Pancreas (tissue), 10 donors: ENCODE measurements at regions of chr11 and their contacts with region 1.

Region 1: DNA sequence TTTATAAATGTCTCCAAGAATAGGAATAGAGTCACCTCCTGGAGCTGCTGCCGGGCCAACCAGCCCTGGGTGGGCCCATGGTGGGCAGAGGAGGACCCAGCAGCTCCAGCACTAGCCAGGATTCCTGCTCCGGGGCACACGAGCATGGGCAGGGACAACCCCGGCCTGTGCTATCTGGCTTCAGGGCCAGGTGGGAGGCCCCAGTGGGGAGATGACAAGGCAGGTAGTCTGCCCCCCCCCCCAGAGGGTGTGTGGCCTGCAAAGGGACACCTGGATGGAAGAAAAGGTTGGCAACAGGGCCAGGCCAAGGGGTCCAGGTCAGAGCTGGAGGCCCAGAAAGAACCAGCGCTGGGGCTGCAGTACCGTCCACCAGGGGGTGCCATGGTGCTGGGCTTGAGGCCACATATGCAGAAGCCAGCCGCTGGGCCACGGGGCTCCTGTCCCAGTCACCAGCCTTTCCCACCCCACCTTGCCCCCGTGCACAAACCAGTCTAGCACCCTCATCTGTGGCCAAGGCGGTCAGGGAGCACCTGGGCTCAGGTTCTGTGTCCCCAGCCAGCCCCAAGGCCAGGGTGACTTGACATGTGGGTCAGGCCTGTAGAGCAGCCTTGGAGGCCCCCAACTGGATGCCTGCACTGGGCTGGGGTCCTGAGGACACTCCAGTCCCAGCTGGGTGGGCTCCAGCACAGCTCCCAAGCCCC is 3.5 kb downstream of the TSPAN32 start:
- DNase-seq: peak; percentile 70 to 98 (median 88)
- ATAC-seq: peak; percentile 60 to 85 (median 82)
- H3K4me3 ChIP-seq: no peak overlapping the region
- H3K27ac ChIP-seq: no peak overlapping the region
- H3K4me1 ChIP-seq: peaks cover 0 to 19% (median 10%) of the 10 kb centered on the region in 3 donors
- H3K27me3 ChIP-seq: no peaks in the 10 kb centered on the region
- CTCF ChIP-seq: peak; percentile 78 to 88 (median 86)

Region 2: DNA sequence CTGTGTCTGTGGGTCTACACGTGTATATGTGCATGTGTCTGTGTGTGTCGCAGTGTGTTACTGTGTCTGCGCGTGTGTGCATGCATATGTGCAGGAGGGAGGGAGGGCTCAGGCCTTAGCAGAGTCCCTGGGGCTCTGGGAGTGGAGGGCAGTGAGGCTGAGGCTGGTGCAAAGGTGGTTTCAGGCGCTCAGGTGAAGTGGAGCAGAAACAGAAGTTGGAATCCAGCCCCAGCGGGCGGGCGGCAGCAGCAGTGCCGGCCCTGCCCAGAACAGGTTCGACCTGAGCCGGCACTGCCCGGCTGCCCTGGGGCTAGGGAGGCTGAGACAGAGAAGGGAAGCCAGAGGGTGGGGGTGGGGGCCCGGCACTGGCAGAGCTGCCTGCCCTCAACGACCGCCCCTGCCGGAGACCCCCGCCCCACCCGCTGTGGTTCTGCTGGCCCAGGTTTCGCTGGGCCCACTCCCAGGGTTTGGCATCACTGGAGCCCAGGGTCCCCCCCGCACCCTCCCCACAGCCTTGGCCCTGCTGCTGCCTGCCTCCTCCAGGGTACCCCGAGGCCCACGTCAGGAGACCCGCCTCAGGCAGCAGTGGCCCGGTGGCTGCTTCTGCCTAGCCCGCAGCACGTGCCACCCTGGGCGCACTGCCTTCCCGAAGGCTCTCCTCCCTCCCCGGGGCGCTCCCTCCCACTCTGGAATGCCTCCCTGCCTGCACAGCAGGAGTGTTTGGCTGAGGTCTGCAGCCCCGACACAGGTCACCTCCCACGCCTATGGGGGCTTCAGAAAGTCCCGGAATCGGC is 48.2 kb before region 1 on chr11:
- intact Hi-C with region 1: no loop called
- DNase-seq: peak in 2 of 6 donors; percentile 57 to 63
- ATAC-seq: peak in 3 of 4 donors; percentile 61 to 82 (median 73)
- H3K4me3 ChIP-seq: no peak overlapping the region
- H3K27ac ChIP-seq: no peak overlapping the region
- H3K4me1 ChIP-seq: no peaks in the 10 kb centered on the region
- H3K27me3 ChIP-seq: no peaks in the 10 kb centered on the region
- CTCF ChIP-seq: no peak

Region 3: GRCh38 chr11:2420502-2421225 is 115.4 kb after region 1 on chr11:
- intact Hi-C with region 1: loop called (anchors 2 to 5 kb)
- DNase-seq: peak; percentile 59 to 92 (median 80)
- ATAC-seq: peak; percentile 93 to 97 (median 95)
- H3K4me3 ChIP-seq: no peak overlapping the region
- H3K27ac ChIP-seq: no peak overlapping the region
- H3K4me1 ChIP-seq: no peaks in the 10 kb centered on the region
- H3K27me3 ChIP-seq: no peaks in the 10 kb centered on the region
- CTCF ChIP-seq: peak; percentile 77 to 96 (median 92)

Region 4: DNA sequence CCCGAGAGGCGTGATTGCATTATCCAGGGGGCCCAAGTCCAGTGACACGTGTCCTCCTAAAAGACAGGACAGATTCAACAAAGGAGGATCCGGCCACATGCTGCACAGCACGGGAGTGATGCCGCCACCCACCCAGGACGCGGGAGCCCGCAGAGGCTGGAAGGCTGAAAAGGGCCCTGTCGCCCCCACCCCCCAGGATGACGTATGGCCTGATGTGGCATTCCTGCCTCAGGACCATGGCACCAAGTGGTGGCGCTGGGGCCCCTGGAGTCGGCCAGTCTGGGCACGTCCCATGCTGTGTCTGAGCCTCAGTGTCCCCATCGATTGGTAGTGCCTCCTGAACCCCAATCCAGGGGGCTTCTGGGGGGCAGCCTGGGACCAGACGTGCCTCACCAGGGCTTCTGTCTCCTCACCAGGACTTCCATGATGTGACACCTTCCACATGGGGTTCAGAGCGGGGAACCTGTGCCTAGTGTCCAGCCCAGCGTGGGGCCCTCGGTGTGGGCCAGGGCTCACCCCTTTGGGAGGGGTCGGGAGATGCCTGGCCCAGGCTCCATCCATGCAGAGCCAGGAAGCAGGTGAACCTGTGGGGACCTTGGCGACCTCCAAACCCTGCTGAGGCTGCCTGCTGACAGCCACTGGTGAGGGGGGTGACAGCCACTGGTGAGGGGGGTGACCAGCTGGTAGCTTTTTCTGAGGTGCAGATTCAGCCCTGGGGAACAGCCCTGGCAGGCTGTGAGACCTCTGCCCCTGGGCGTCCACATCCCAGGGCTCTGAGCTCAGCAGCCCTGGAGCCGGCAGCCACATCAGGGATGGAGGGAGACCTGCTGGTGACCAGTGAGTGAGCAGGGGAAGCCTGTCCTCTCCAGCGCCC is 214.8 kb after region 1 on chr11:
- intact Hi-C with region 1: loop called in 1 of 3 experiments (anchors 5 kb)
- DNase-seq: peak; percentile 1 to 67 (median 14)
- ATAC-seq: no peak
- H3K4me3 ChIP-seq: no peak overlapping the region
- H3K27ac ChIP-seq: no peak overlapping the region
- H3K4me1 ChIP-seq: peaks cover 2 to 6% (median 4%) of the 10 kb centered on the region in 3 donors
- H3K27me3 ChIP-seq: no peaks in the 10 kb centered on the region
- CTCF ChIP-seq: no peak

Region 5: GRCh38 chr11:2892215-2893020 is 587.1 kb after region 1 on chr11:
- intact Hi-C with region 1: loop called in 1 of 3 experiments (anchors 10 kb)
- DNase-seq: peak in 3 of 6 donors; percentile 46 to 80 (median 64)
- ATAC-seq: peak in 3 of 4 donors; percentile 56 to 65 (median 59)
- H3K4me3 ChIP-seq: peak overlapping the region in 1 of 4 donors; percentile 29
- H3K27ac ChIP-seq: peak overlapping the region in 2 of 4 donors; percentile 3 to 13
- H3K4me1 ChIP-seq: peaks cover 14 to 23% (median 17%) of the 10 kb centered on the region in 3 donors
- H3K27me3 ChIP-seq: no peaks in the 10 kb centered on the region
- CTCF ChIP-seq: peak; percentile 69 to 83 (median 80)